Uterus (tissue), 4 donors: ENCODE measurements at regions of chr9 and their contacts with region 1.

Region 1: DNA sequence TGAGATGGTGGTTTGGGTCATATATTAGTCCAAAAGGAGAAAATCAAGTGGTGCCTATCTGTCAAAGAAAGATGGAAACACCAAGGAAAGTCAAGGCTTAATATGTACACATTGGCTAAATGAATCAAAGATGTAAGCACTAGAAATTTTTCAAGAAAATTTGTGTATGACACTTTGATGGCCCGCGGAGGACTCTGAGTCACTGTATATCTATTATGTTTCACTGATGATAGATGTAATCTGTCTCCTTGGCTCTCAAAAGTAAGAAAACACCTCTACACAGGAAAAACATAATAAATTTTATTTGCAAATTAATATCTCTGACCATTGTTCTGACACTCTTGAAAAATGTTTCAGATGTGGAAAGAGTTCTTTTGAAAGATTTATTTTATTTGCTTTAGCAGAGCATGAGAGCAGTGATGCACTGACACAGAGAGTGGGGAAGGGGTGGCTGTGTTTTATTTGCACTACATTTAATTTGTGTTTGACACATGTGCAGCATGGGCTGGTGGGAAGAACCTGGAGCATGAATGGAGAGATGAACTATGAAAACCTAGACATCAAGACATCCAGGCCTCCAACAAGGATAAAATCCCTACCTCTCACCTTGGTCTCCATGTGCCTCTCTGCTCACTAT is 180.8 kb upstream of the GAS1 start:
- DNase-seq: peak in 1 of 2 donors; percentile 68
- H3K4me3 ChIP-seq: no peak overlapping the region
- H3K27ac ChIP-seq: peak overlapping the region; percentile 44 to 61
- H3K4me1 ChIP-seq: peaks cover 0 to 24% of the 10 kb centered on the region in 2 donors
- H3K27me3 ChIP-seq: no peaks in the 10 kb centered on the region
- CTCF ChIP-seq: no peak
- POLR2A ChIP-seq: no peak

Region 2: GRCh38 chr9:86948074-86948929 is 179.8 kb before region 1 on chr9:
- intact Hi-C with region 1: loop called (anchors 5 kb)
- DNase-seq: peak; percentile 83 to 87
- H3K4me3 ChIP-seq: peak overlapping the region; percentile 57 to 93
- H3K27ac ChIP-seq: peak overlapping the region; percentile 93 to 96
- H3K4me1 ChIP-seq: no peaks in the 10 kb centered on the region
- H3K27me3 ChIP-seq: no peaks in the 10 kb centered on the region
- CTCF ChIP-seq: peak; percentile 70 to 98 (median 87)
- POLR2A ChIP-seq: peak in 1 of 2 donors; percentile 45

Region 3: GRCh38 chr9:87035879-87036278 is 92.2 kb before region 1 on chr9:
- intact Hi-C with region 1: no loop called
- DNase-seq: peak; percentile 66 to 84
- H3K4me3 ChIP-seq: no peak overlapping the region
- H3K27ac ChIP-seq: peak overlapping the region; percentile 88 to 89
- H3K4me1 ChIP-seq: peaks cover 5 to 11% of the 10 kb centered on the region in 2 donors
- H3K27me3 ChIP-seq: no peaks in the 10 kb centered on the region
- CTCF ChIP-seq: no peak
- POLR2A ChIP-seq: no peak

Region 4: DNA sequence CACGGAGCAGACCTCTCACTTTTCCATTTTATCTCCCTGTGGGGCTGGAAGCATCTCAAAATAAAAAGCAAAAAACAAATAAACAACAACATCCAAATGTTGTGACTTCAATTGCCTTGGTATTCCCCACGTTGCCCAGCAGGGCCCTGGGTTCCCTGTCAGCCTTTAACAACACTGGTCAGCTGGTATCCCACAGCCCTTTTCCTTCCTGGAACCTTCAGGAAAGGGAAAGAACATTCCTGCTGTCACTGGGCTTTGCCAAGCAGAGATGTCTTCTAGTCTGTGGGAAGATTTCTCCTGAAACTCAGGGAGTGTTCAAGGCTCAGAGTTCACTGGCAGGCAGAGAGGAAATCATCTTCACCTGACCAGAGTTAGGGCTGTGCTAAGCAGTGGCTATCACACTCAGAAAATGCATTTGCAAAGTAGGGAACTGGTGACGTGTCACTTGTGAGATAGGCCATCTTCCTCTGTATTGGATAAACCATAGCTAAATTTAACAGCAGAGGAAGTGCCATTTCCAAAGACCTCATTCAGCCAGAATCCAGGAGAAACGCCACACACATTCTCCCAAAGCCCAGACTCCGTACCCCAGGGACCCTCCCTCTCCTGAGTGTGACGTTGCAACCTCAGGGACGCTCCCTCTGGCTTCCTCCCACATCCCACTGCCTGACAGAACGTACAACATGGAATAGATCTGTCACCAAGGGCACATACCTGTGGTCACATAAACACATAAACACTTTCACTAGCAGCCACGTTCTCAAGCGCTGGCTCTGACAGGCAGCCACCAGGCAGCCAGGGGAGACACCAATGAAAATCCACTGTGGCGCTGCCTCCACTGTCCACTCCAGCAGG is 95.5 kb after region 1 on chr9:
- intact Hi-C with region 1: no loop called
- DNase-seq: no peak
- H3K4me3 ChIP-seq: no peak overlapping the region
- H3K27ac ChIP-seq: no peak overlapping the region
- H3K4me1 ChIP-seq: no peaks in the 10 kb centered on the region
- H3K27me3 ChIP-seq: no peaks in the 10 kb centered on the region
- CTCF ChIP-seq: no peak
- POLR2A ChIP-seq: no peak

Region 5: GRCh38 chr9:87255431-87256155 is 127.5 kb after region 1 on chr9:
- intact Hi-C with region 1: no loop called
- DNase-seq: no peak
- H3K4me3 ChIP-seq: no peak overlapping the region
- H3K27ac ChIP-seq: no peak overlapping the region
- H3K4me1 ChIP-seq: no peaks in the 10 kb centered on the region
- H3K27me3 ChIP-seq: no peaks in the 10 kb centered on the region
- CTCF ChIP-seq: no peak
- POLR2A ChIP-seq: no peak

Region 6: DNA sequence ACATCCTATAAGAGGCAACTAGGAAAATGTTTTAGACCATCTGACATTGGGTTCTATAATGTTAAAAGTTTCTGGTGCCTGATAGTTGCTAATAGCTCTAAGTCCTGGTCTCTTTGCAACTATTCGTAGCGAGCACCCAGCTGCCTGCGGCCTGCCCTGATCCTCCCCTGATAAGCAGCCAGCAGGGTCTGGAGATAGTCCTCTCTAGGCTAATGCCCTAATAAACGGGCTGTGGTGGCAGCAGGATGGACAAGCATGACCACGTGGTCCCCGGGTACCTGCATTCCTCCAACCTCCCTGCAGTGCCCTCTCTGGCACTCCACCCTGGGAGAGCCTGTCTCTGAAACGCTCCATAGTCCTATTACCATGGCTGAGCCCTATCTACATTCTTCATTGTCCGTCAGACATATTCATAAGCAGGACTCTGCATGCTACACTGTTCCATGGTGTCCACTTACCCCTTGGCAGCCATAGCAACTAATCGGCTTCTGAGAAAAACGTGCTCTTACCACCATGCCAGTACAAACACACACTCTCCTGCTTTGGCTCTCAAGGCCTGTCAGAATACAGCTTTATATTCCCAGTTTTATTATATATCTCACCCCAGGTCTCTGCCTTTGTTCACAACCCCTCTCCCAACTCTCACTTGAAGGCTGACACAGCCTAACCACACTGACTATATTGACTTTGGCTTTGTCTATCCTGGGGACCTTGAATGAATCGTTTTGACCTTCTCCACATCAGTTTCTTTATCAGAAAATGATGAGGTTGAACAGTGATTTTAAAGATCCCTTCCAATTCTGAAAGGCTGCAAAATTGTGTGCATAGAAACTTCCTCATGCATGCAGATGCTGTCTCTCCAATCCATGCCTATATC is 319.7 kb after region 1 on chr9:
- intact Hi-C with region 1: no loop called
- DNase-seq: no peak
- H3K4me3 ChIP-seq: no peak overlapping the region
- H3K27ac ChIP-seq: no peak overlapping the region
- H3K4me1 ChIP-seq: no peaks in the 10 kb centered on the region
- H3K27me3 ChIP-seq: no peaks in the 10 kb centered on the region
- CTCF ChIP-seq: no peak
- POLR2A ChIP-seq: no peak